Endothelial cell of umbilical vein (primary cell): ENCODE measurements at regions of chr2 and their contacts with region 1.

Region 1: GRCh38 chr2:15560988-15561573 is at the start of gene NBAS:
- DNase-seq: peak; percentile 89
- H3K4me3 ChIP-seq: peak within 1 kb of the TSS; percentile 86 to 100 (median 93)
- H3K27ac ChIP-seq: peak within 1 kb of the TSS; percentile 73
- H3K4me1 ChIP-seq: peaks cover 19% of the 10 kb centered on the region
- H3K27me3 ChIP-seq: no peaks in the 10 kb centered on the region
- CTCF ChIP-seq: no peak
- POLR2A ChIP-seq: peak; percentile 76
- total RNA-seq, gene NBAS: 41.2 and 43.0 TPM in 2 replicates

Region 2: DNA sequence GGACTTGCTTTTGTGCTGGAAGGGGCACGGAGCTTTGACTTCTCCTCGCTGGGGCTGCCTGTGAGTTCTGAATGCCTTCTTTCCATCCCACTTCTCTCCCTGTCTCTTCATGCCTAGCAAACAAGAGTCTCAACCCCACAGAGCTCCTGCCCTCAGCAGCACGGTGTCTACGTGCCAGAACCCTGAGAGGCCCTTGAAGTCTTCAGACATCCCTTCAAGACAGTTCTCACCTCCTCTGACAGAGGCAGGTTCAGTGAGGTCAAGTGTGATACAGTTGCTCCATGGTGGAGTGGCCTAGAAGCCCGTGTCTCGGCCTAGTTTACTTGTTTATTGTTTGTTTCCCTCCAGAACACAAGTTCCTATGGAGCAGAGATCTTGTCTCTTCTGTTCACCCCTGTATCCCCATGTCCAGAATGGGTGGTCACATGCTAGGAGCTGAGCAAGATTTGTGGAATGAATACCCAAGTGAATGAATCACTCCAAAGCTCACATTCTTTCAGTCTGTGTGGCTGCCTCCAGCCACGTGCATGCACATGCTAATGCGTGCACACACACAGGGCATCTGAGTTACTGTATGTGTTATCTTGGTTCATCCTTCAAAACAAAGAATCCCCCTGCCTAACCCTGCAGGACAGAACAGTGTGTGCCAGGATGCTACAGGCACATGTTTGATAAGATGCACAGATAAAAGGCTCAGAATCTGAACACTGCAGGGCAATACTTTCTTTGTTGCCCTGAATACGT is 391.6 kb before region 1 on chr2:
- CTCF ChIA-PET with region 1: no interaction called
- POLR2A ChIA-PET with region 1: no interaction called
- dilution Hi-C with region 1: no loop called
- intact Hi-C with region 1: loop called (anchors 1 kb)
- DNase-seq: peak; percentile 86
- H3K4me3 ChIP-seq: peak overlapping the region in 1 of 3 experiments; percentile 20
- H3K27ac ChIP-seq: peak overlapping the region; percentile 94
- H3K4me1 ChIP-seq: peaks cover 24% of the 10 kb centered on the region
- H3K27me3 ChIP-seq: no peaks in the 10 kb centered on the region
- CTCF ChIP-seq: no peak
- POLR2A ChIP-seq: no peak

Region 3: DNA sequence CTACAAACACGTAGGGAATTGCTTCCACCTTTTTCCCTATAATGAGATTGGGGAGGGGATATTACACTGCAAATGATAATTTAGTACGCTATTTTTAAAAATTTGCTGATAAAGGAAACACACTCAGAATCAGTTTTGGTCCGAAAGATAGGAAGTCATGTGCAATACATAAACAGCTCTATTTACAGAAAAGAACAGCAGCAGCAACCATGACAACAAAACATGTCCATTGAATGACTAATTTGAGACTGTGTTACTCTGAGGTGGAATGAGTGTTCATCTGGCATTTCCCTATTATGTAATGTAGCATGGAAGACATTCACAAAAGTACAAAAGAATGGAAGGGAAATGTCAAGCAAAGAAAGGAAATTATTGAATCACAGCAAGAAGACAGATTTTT is 337.2 kb before region 1 on chr2:
- CTCF ChIA-PET with region 1: no interaction called
- POLR2A ChIA-PET with region 1: no interaction called
- dilution Hi-C with region 1: no loop called
- intact Hi-C with region 1: loop called (anchors 2 kb)
- DNase-seq: peak; percentile 91
- H3K4me3 ChIP-seq: no peak overlapping the region
- H3K27ac ChIP-seq: peak overlapping the region; percentile 91
- H3K4me1 ChIP-seq: peaks cover 17% of the 10 kb centered on the region
- H3K27me3 ChIP-seq: no peaks in the 10 kb centered on the region
- CTCF ChIP-seq: no peak
- POLR2A ChIP-seq: no peak

Region 4: DNA sequence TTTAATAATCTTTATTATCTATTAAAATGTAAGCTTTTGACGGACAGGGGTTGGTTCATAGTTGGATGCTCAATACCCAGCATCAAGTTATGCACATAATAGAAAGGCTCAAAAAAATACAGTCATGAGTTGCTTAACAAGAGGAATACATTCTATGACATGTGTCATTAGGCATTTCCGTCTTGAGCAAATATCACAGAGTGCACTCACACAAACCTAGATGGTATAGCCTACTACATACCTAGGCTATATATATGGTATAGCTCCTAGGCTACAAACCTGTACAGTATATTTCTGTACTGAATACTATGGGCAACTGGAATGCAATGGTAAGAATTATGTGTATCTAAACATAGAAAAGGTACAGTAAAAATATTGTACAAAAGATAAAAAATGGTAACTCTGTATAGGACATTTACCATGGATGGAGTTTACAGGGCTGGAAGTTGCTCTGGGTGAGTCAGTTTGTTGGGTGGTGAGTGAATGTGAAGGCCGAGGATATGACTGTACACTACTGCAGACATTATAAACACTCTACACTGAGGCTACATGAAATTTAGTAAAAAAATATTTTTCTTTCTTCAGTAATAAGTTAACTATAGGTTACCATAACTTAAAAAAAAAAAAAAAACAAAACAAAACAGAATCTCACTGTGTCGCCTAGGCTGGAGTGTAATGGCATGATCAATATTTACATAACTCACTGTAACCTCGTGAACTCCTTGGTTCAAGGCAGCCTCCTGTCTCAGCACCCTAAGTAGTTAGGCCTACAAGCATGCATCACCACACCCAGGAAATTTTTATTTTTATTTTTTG is 201.2 kb before region 1 on chr2:
- CTCF ChIA-PET with region 1: no interaction called
- POLR2A ChIA-PET with region 1: no interaction called
- dilution Hi-C with region 1: no loop called
- intact Hi-C with region 1: loop called (anchors 1 kb)
- DNase-seq: peak; percentile 89
- H3K4me3 ChIP-seq: no peak overlapping the region
- H3K27ac ChIP-seq: peak overlapping the region; percentile 79
- H3K4me1 ChIP-seq: peaks cover 22% of the 10 kb centered on the region
- H3K27me3 ChIP-seq: no peaks in the 10 kb centered on the region
- CTCF ChIP-seq: no peak
- POLR2A ChIP-seq: no peak

Region 5: GRCh38 chr2:15492773-15493325 is 68.2 kb before region 1 on chr2:
- CTCF ChIA-PET with region 1: no interaction called
- POLR2A ChIA-PET with region 1: no interaction called
- dilution Hi-C with region 1: no loop called
- intact Hi-C with region 1: loop called (anchors 2 kb)
- DNase-seq: peak; percentile 49
- H3K4me3 ChIP-seq: no peak overlapping the region
- H3K27ac ChIP-seq: no peak overlapping the region
- H3K4me1 ChIP-seq: no peaks in the 10 kb centered on the region
- H3K27me3 ChIP-seq: no peaks in the 10 kb centered on the region
- CTCF ChIP-seq: no peak
- POLR2A ChIP-seq: no peak

Region 6: DNA sequence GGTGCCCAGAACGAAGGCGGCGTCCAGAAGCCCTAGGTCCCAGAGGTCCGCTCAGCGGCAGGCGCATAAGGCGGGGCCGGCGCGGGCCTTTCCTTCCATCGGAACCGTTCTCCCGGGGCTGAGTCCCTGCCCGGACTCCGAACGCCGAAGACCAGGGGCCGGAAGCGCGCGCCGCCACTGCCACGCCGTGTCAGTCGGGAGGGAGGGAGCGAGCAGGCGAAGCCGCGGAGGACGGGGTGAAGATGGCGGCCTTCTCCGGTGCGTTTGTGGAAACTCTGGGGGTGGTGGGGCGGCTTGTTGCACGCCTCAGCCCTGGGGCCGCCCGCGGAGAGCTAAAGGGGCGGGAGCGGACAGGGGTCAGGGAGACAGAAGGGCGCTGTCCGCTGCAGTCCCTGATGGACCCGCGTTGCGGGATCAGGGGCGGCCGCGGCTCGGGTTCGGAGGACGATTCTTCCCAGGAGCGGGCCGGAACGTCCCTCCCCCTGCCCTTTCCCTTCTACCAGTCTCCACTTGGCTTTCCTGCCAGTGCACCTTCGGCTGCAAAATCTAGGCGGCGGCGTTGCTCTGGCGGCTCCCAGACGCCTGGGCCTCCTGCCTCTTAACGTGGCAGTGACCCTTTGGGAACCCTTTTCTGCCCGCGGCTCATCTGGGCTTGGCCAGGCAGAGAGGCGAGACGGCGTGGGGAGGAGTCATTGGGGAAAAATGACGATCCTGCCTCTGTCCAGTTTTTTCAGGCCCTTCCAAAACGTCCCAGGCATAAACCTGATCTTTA is 30.8 kb after region 1 on chr2 and contains the start of gene DDX1:
- CTCF ChIA-PET with region 1: interaction called, 12 read pairs
- POLR2A ChIA-PET with region 1: no interaction called
- dilution Hi-C with region 1: no loop called
- intact Hi-C with region 1: no loop called
- DNase-seq: peak; percentile 82
- H3K4me3 ChIP-seq: peak within 1 kb of the TSS; percentile 74 to 99 (median 96)
- H3K27ac ChIP-seq: peak within 1 kb of the TSS; percentile 74
- H3K4me1 ChIP-seq: peaks cover 15% of the 10 kb centered on the region
- H3K27me3 ChIP-seq: no peaks in the 10 kb centered on the region
- CTCF ChIP-seq: no peak
- POLR2A ChIP-seq: peak; percentile 82
- total RNA-seq, gene DDX1: 117 and 124 TPM in 2 replicates